Body of pancreas (tissue), 4 donors: ENCODE measurements at regions of chr12 and their contacts with region 1.

Region 1: GRCh38 chr12:30847259-30847658 is 79.3 kb upstream of the TSPAN11 start:
- DNase-seq: peak in 1 of 4 donors; percentile 11
- ATAC-seq: no peak
- H3K4me3 ChIP-seq: no peak overlapping the region
- H3K27ac ChIP-seq: no peak overlapping the region
- H3K4me1 ChIP-seq: peaks cover 7% of the 10 kb centered on the region
- H3K27me3 ChIP-seq: no peaks in the 10 kb centered on the region
- CTCF ChIP-seq: peak in 6 of 7 experiments; percentile 34 to 57 (median 48)
- POLR2A ChIP-seq: no peak

Region 2: GRCh38 chr12:30989754-30990153 is 142.5 kb after region 1 on chr12:
- intact Hi-C with region 1: loop called (anchors 10 kb)
- DNase-seq: peak; percentile 41 to 61 (median 46)
- ATAC-seq: peak; percentile 41
- H3K4me3 ChIP-seq: no peak overlapping the region
- H3K27ac ChIP-seq: no peak overlapping the region
- H3K4me1 ChIP-seq: peaks cover 20% of the 10 kb centered on the region
- H3K27me3 ChIP-seq: no peaks in the 10 kb centered on the region
- CTCF ChIP-seq: peak in 4 of 7 experiments; percentile 30 to 35 (median 32)
- POLR2A ChIP-seq: no peak

Region 3: GRCh38 chr12:31238764-31239387 is 391.6 kb after region 1 on chr12:
- intact Hi-C with region 1: loop called (anchors 10 kb)
- DNase-seq: peak; percentile 79 to 87 (median 82)
- ATAC-seq: peak; percentile 77
- H3K4me3 ChIP-seq: no peak overlapping the region
- H3K27ac ChIP-seq: no peak overlapping the region
- H3K4me1 ChIP-seq: peaks cover 19% of the 10 kb centered on the region
- H3K27me3 ChIP-seq: no peaks in the 10 kb centered on the region
- CTCF ChIP-seq: peak; percentile 35 to 85 (median 74)
- POLR2A ChIP-seq: no peak